Activated CD4-positive, alpha-beta T cell treated with anti-CD3 and anti-CD28 coated beads, Interleukin-2, amount 10 ng/mL, durations not matched to agents 24 days and 14 days (primary cell): ENCODE measurements at regions of chr2 and their contacts with region 1.

Region 1: DNA sequence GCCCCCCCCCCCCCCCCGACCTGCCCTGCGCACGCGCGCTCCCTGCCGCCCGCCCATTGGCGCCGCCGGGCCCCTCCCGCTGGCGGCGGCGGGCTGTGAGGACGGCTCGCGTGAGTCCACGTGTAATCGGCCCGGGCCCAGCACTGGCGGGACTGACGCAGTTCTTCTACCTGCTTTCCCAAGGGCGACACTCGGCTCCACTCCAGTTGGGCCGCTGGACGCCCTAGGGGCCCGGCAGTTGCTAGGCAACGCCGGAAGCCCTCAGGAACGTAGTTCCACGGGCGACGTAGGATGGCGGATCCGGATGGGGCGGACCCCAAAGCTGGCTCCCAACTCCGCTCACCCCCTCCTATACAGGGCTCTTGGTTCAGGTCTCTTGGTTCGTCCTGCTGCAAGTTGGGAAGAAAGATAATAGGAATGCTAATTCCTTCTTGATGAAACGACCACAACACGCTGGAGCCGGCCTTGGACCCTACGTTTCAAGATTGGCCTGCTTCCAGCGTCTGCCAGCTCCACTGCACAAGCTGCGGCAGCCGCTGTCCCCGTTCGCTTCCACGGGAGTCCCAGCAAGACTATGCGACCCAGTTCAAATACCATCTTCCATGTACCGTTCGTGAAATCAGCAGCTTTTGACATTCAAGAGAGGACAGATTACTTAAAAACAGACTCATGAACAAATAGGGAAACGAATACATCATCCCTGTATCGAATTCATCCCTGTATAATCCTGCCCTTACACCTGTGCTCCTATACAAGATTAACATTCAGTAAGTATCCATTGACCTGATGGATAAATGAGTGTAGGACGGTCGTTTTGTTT is 415 bp upstream of the MCFD2 start:
- DNase-seq: peak; percentile 94
- H3K4me3 Mint-ChIP-seq: peak overlapping the region; percentile 93
- H3K27ac Mint-ChIP-seq: peak overlapping the region; percentile 85
- H3K4me1 Mint-ChIP-seq: peaks cover 39% of the 10 kb centered on the region
- H3K27me3 Mint-ChIP-seq: no peaks in the 10 kb centered on the region

Region 2: GRCh38 chr2:46461011-46461674 is 454.9 kb before region 1 on chr2:
- intact Hi-C with region 1: no loop called
- DNase-seq: peak; percentile 93
- H3K4me3 Mint-ChIP-seq: no peak overlapping the region
- H3K27ac Mint-ChIP-seq: peak overlapping the region; percentile 35
- H3K4me1 Mint-ChIP-seq: peaks cover 13% of the 10 kb centered on the region
- H3K27me3 Mint-ChIP-seq: peaks cover 4% of the 10 kb centered on the region

Region 3: DNA sequence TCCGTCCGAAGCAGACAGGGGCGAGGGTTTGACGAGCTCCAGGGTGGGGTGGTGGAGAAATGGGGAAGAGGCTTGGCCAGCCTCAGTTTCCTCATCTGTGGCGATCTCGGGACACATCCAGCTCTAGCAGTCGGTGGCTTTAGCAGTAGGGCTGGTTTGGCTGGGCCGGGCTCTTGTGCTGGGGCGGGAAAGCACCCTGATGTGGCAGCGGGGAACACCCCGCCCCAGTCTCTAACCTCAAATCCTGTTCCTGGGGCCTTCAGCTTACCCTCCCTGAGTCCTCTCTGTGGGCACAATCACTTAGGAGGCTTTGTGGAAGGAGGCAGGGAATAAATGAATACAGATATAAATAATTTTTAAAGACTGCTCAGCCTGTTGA is 26.1 kb after region 1 on chr2:
- intact Hi-C with region 1: loop called (anchors 1 kb)
- DNase-seq: peak; percentile 93
- H3K4me3 Mint-ChIP-seq: peak overlapping the region; percentile 97
- H3K27ac Mint-ChIP-seq: peak overlapping the region; percentile 100
- H3K4me1 Mint-ChIP-seq: peaks cover 51% of the 10 kb centered on the region
- H3K27me3 Mint-ChIP-seq: no peaks in the 10 kb centered on the region

Region 4: DNA sequence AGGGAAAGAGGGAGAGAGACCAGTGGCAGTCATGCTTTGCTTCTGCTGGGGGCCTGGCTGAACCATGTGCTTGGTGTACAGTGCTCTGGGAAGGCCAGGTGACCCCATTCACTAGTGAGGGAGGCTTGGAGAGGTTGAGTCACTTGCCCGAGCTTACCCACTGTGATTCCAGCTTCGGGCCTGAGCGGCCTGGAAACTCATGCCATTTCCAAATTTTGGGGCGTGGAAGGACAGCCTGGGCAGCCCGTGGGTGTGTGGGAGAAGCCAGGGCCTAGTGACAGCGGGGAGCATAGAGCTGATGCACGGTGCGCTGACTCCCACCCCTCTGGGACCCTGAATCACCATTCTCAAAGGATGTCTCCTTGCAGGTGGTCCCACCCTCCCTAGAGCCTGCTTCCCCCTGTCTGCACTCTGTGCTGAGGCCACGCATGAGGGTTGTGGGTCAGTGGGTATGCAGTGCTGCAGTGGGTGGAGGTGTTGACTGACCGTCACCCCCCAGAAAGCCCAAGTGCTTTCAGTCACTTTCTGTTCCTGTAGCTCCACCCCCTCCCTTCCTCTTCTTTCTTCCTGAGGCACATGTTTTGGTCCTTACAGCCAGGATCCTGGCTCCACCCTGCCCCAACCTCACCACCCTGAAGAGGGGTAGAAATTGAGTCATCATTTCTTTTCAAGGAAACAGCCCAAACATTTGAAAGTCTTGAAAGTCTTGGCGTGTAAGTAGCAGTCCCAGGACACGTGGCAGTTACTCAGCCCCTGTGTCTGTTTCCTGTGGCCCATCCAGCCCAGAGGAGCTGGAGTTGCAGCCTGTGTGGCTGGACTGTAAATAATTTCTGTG is 68.8 kb after region 1 on chr2:
- intact Hi-C with region 1: loop called (anchors 1 kb)
- DNase-seq: peak; percentile 89
- H3K4me3 Mint-ChIP-seq: peak overlapping the region; percentile 79
- H3K27ac Mint-ChIP-seq: peak overlapping the region; percentile 97
- H3K4me1 Mint-ChIP-seq: peaks cover 63% of the 10 kb centered on the region
- H3K27me3 Mint-ChIP-seq: no peaks in the 10 kb centered on the region

Region 5: GRCh38 chr2:47272031-47272864 is 356.2 kb after region 1 on chr2:
- intact Hi-C with region 1: loop called (anchors 5 kb)
- DNase-seq: peak; percentile 87
- H3K4me3 Mint-ChIP-seq: peak overlapping the region; percentile 73
- H3K27ac Mint-ChIP-seq: peak overlapping the region; percentile 25
- H3K4me1 Mint-ChIP-seq: peaks cover 2% of the 10 kb centered on the region
- H3K27me3 Mint-ChIP-seq: peaks cover 6% of the 10 kb centered on the region

Region 6: DNA sequence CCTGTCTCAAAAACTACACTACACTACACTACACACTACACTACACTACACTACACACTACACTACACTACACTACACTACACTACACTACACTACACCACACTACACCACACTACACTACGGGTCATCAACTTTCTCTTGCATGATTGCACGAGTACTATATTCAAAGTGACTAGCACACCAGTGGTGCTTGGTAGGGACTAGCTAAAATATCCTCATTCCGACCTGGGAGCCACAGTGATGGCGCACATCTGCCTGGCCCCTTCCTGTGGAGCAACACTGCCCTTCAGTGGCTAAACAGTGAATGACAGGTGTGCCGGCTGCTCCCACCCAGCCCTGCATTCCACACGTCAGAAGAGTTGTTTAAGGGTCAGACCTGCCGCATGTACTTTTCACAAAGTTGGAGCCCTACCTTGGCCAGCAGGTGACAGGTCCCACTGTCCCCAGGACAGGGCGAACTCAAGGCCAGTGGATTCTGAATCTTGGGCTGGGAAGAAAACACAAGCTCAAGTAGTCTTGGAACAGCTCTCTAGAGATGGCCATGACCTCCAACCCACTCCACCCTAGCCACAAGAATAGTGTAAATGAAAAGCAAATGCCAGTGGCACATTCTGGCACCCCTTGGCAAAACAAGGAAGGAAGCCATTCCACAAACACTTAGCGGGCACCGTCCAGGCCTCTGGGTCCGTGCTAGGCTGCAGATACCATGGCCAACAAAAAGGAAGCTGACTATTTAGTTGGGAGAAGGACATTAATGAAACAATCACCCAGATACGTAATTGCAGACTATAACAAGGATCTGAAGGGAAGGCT is 407.2 kb after region 1 on chr2:
- intact Hi-C with region 1: loop called (anchors 10 kb)
- DNase-seq: peak; percentile 90
- H3K4me3 Mint-ChIP-seq: no peak overlapping the region
- H3K27ac Mint-ChIP-seq: no peak overlapping the region
- H3K4me1 Mint-ChIP-seq: no peaks in the 10 kb centered on the region
- H3K27me3 Mint-ChIP-seq: peaks cover 11% of the 10 kb centered on the region

Region 7: GRCh38 chr2:47402805-47403608 is 487.0 kb after region 1 on chr2 and contains the start of gene MSH2:
- intact Hi-C with region 1: loop called (anchors 5 kb)
- DNase-seq: peak; percentile 98
- H3K4me3 Mint-ChIP-seq: peak within 1 kb of the TSS; percentile 97
- H3K27ac Mint-ChIP-seq: peak within 1 kb of the TSS; percentile 96
- H3K4me1 Mint-ChIP-seq: peaks cover 31% of the 10 kb centered on the region
- H3K27me3 Mint-ChIP-seq: no peaks in the 10 kb centered on the region
- total RNA-seq, gene MSH2: 79.7 and 79.8 TPM in 2 replicates

Region 8: GRCh38 chr2:47520825-47521665 is 605.0 kb after region 1 on chr2:
- intact Hi-C with region 1: loop called (anchors 5 kb)
- DNase-seq: peak; percentile 93
- H3K4me3 Mint-ChIP-seq: peak overlapping the region; percentile 90
- H3K27ac Mint-ChIP-seq: peak overlapping the region; percentile 96
- H3K4me1 Mint-ChIP-seq: peaks cover 7% of the 10 kb centered on the region
- H3K27me3 Mint-ChIP-seq: no peaks in the 10 kb centered on the region